GM12878 (cell line): ENCODE measurements at regions of chr17 and their contacts with region 1.

Region 1: DNA sequence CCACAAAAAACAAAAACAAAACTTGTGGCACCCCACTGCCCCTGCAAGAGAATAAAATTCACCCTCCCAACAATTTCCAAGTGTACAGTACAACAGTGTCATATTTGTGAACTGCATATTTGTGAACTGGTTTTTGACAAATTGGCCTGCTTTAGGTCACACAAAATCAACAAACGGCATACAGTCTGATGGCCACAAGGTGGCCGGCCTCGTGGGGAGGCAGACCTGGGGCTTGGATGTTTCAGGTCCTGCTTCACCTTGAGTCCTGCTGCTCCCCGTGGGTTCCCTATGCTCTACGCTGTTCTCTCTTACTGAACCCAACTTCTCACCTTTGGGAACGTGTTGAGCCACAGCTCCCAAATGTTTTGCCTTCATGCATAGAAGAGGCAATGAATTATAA is 102.2 kb downstream of the CDK5R1 start:
- DNase-seq: no peak
- ATAC-seq: peak; percentile 74
- H3K4me3 ChIP-seq: no peak overlapping the region
- H3K27ac ChIP-seq: no peak overlapping the region
- H3K4me1 ChIP-seq: no peaks in the 10 kb centered on the region
- H3K27me3 ChIP-seq: no peaks in the 10 kb centered on the region
- CTCF ChIP-seq: peak in 2 of 3 experiments; percentile 31 to 32; a peak in 2 of 6 replicates
- EP300 ChIP-seq: no peak
- POLR2A ChIP-seq: no peak
- RAD21 ChIP-seq: 0 out of 2 replicates have a peak, but pooled peaks have one; percentile 18

Region 2: GRCh38 chr17:32575880-32576279 is 13.1 kb before region 1 on chr17:
- CTCF ChIA-PET with region 1: interaction called, 4 read pairs
- POLR2A ChIA-PET with region 1: no interaction called
- RAD21 ChIA-PET with region 1: no interaction called
- SMC1A ChIA-PET with region 1: interaction called, 29 read pairs
- in situ Hi-C with region 1: no loop called
- intact Hi-C with region 1: no loop called
- DNase-seq: no peak
- ATAC-seq: peak; percentile 66
- H3K4me3 ChIP-seq: no peak overlapping the region
- H3K27ac ChIP-seq: no peak overlapping the region
- H3K4me1 ChIP-seq: peaks cover 8% of the 10 kb centered on the region
- H3K27me3 ChIP-seq: no peaks in the 10 kb centered on the region
- CTCF ChIP-seq: no peak
- EP300 ChIP-seq: no peak
- POLR2A ChIP-seq: no peak
- RAD21 ChIP-seq: no peak

Region 3: GRCh38 chr17:32636598-32637218 is 47.7 kb after region 1 on chr17:
- CTCF ChIA-PET with region 1: no interaction called
- POLR2A ChIA-PET with region 1: no interaction called
- RAD21 ChIA-PET with region 1: no interaction called
- SMC1A ChIA-PET with region 1: no interaction called
- in situ Hi-C with region 1: no loop called
- intact Hi-C with region 1: no loop called
- DNase-seq: no peak
- ATAC-seq: no peak
- H3K4me3 ChIP-seq: no peak overlapping the region
- H3K27ac ChIP-seq: no peak overlapping the region
- H3K4me1 ChIP-seq: no peaks in the 10 kb centered on the region
- H3K27me3 ChIP-seq: no peaks in the 10 kb centered on the region
- CTCF ChIP-seq: no peak
- EP300 ChIP-seq: no peak
- POLR2A ChIP-seq: no peak
- RAD21 ChIP-seq: no peak